ENCODE measurements at regions of chr2 and their contacts with region 1.

Region 1: GRCh38 chr2:60818272-60818671 is 62.2 kb downstream of the PAPOLG start:
- DNase-seq: peak; percentile 74
- H3K4me3 Mint-ChIP-seq: no peak overlapping the region
- H3K27ac Mint-ChIP-seq: peak overlapping the region; percentile 97
- H3K4me1 Mint-ChIP-seq: peaks cover 46% of the 10 kb centered on the region
- H3K27me3 Mint-ChIP-seq: no peaks in the 10 kb centered on the region

Region 2: GRCh38 chr2:60794277-60794863 is 23.9 kb before region 1 on chr2:
- CTCF ChIA-PET with region 1: interaction called, 3 read pairs
- POLR2A ChIA-PET with region 1: no interaction called
- intact Hi-C with region 1: loop called (anchors 2 kb)
- DNase-seq: no peak
- H3K4me3 Mint-ChIP-seq: no peak overlapping the region
- H3K27ac Mint-ChIP-seq: no peak overlapping the region
- H3K4me1 Mint-ChIP-seq: peaks cover 15% of the 10 kb centered on the region
- H3K27me3 Mint-ChIP-seq: no peaks in the 10 kb centered on the region

Region 3: GRCh38 chr2:60873381-60873780 is 55.1 kb after region 1 on chr2:
- CTCF ChIA-PET with region 1: no interaction called
- POLR2A ChIA-PET with region 1: no interaction called
- intact Hi-C with region 1: loop called (anchors 1 kb)
- DNase-seq: peak; percentile 36
- H3K4me3 Mint-ChIP-seq: peak overlapping the region; percentile 29
- H3K27ac Mint-ChIP-seq: peak overlapping the region; percentile 90
- H3K4me1 Mint-ChIP-seq: peaks cover 29% of the 10 kb centered on the region
- H3K27me3 Mint-ChIP-seq: no peaks in the 10 kb centered on the region

Region 4: GRCh38 chr2:60899230-60899891 is 81.1 kb after region 1 on chr2:
- CTCF ChIA-PET with region 1: no interaction called
- POLR2A ChIA-PET with region 1: no interaction called
- intact Hi-C with region 1: loop called (anchors 1 kb)
- DNase-seq: peak; percentile 74
- H3K4me3 Mint-ChIP-seq: peak overlapping the region; percentile 43
- H3K27ac Mint-ChIP-seq: peak overlapping the region; percentile 85
- H3K4me1 Mint-ChIP-seq: peaks cover 31% of the 10 kb centered on the region
- H3K27me3 Mint-ChIP-seq: no peaks in the 10 kb centered on the region

Region 5: DNA sequence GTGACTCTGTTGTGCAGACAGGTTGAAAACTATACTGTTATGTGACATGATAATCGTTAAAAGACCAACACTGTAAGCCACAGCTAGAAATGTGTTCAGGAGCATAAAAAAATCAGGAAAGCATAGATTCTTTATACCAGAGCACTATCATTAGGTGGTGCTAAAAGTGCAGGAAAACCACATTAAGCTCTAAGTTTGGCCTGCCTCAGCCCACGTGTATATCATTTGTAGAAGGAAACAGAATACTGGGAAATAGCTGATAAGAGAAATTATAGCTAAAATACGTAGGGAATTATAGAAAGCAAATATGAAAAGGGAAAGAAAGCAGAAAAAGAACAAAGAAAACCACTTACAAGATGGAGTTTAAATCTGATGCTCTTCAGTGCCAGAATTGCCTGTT is 317.2 kb after region 1 on chr2:
- CTCF ChIA-PET with region 1: no interaction called
- POLR2A ChIA-PET with region 1: no interaction called
- intact Hi-C with region 1: no loop called
- DNase-seq: no peak
- H3K4me3 Mint-ChIP-seq: no peak overlapping the region
- H3K27ac Mint-ChIP-seq: no peak overlapping the region
- H3K4me1 Mint-ChIP-seq: no peaks in the 10 kb centered on the region
- H3K27me3 Mint-ChIP-seq: no peaks in the 10 kb centered on the region

Region 6: GRCh38 chr2:61176755-61177726 is 358.8 kb after region 1 on chr2:
- CTCF ChIA-PET with region 1: no interaction called
- POLR2A ChIA-PET with region 1: interaction called, 3 read pairs
- intact Hi-C with region 1: loop called (anchors 5 kb)
- DNase-seq: peak; percentile 95
- H3K4me3 Mint-ChIP-seq: peak overlapping the region; percentile 89
- H3K27ac Mint-ChIP-seq: peak overlapping the region; percentile 94
- H3K4me1 Mint-ChIP-seq: peaks cover 47% of the 10 kb centered on the region
- H3K27me3 Mint-ChIP-seq: no peaks in the 10 kb centered on the region